H1 (cell line): ENCODE measurements at regions of chr3 and their contacts with region 1.

Region 1: GRCh38 chr3:138468886-138469285 is 34.5 kb downstream of the ESYT3 start:
- DNase-seq: peak in 1 of 2 experiments; percentile 29
- H3K4me3 ChIP-seq: no peak overlapping the region
- H3K27ac ChIP-seq: no peak overlapping the region
- H3K4me1 ChIP-seq: peaks cover 0 to 3% (median 0%) of the 10 kb centered on the region in 4 experiments; a peak in 4 of 7 replicates
- H3K27me3 ChIP-seq: no peaks in the 10 kb centered on the region
- CTCF ChIP-seq: no peak
- EP300 ChIP-seq: no peak
- POLR2A ChIP-seq: no peak
- RAD21 ChIP-seq: no peak

Region 2: GRCh38 chr3:138450704-138451424 is 18.0 kb before region 1 on chr3:
- CTCF ChIA-PET with region 1: interaction called, 10 read pairs
- POLR2A ChIA-PET with region 1: interaction called, 4 read pairs
- DNase-seq: no peak
- H3K4me3 ChIP-seq: no peak overlapping the region
- H3K27ac ChIP-seq: no peak overlapping the region
- H3K4me1 ChIP-seq: peaks cover 0 to 10% (median 5%) of the 10 kb centered on the region in 4 experiments; a peak in 5 of 7 replicates
- H3K27me3 ChIP-seq: no peaks in the 10 kb centered on the region
- CTCF ChIP-seq: no peak
- EP300 ChIP-seq: no peak
- POLR2A ChIP-seq: no peak
- RAD21 ChIP-seq: no peak

Region 3: DNA sequence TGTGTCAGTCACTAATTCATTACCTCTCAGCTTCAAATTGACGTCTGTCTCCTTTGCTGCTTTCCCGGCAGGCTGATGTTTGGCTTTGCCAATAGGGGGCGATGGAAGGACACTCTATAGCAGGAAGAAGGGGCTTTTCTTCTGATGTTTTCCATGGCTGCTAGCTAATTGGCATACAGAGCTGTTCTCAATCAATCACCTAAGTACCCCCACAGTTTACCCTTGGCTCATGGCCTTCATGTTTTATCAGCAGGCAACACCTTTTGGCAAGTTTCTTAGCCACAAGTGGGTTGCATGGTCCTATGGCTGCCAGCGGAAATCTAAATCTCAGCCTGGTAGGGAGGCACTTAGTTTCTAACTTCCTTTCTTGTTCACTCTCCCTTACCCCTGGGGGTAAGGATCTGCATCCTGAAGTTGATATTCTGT is 10.6 kb after region 1 on chr3:
- CTCF ChIA-PET with region 1: interaction called, 10 read pairs
- POLR2A ChIA-PET with region 1: no interaction called
- DNase-seq: no peak
- H3K4me3 ChIP-seq: no peak overlapping the region
- H3K27ac ChIP-seq: no peak overlapping the region
- H3K4me1 ChIP-seq: peaks cover 0 to 2% (median 0%) of the 10 kb centered on the region in 4 experiments; a peak in 1 of 7 replicates
- H3K27me3 ChIP-seq: no peaks in the 10 kb centered on the region
- CTCF ChIP-seq: peak; percentile 74 to 90 (median 81)
- EP300 ChIP-seq: no peak
- POLR2A ChIP-seq: no peak
- RAD21 ChIP-seq: peak; percentile 87 to 91